Calu3 (cell line): ENCODE measurements at regions of chr4 and their contacts with region 1.

Region 1: GRCh38 chr4:183471946-183472708 is 27.7 kb downstream of the CDKN2AIP start:
- DNase-seq: peak; percentile 87
- H3K4me3 Mint-ChIP-seq: no peak overlapping the region
- H3K27ac Mint-ChIP-seq: no peak overlapping the region
- H3K4me1 Mint-ChIP-seq: peaks cover 22% of the 10 kb centered on the region
- H3K27me3 Mint-ChIP-seq: no peaks in the 10 kb centered on the region
- CTCF ChIP-seq: peak; percentile 46

Region 2: DNA sequence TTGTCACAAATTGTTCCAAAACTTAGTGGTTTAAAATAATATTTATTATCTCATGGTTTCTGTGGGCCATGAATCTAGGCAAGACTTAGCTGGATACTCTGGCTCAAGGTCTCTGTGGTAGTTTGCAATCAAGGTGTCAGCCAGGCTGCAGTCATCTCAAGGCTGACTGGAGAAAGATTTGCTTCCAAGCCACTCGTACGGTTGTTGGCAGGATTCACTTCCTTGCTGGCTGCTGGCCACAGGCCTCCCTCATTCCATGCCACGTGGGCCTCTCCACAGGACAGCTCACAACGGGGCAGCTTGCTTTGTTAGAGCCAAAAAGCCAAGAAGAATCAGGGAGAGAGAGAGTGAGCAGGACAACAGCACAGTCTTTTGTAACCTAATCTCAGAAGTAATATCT is 271.7 kb before region 1 on chr4:
- CTCF ChIA-PET with region 1: no interaction called
- intact Hi-C with region 1: no loop called
- DNase-seq: peak; percentile 75
- H3K4me3 Mint-ChIP-seq: no peak overlapping the region
- H3K27ac Mint-ChIP-seq: peak overlapping the region; percentile 54
- H3K4me1 Mint-ChIP-seq: peaks cover 32% of the 10 kb centered on the region
- H3K27me3 Mint-ChIP-seq: no peaks in the 10 kb centered on the region
- CTCF ChIP-seq: no peak

Region 3: GRCh38 chr4:183602557-183603027 is 130.5 kb after region 1 on chr4:
- CTCF ChIA-PET with region 1: interaction called, 3 read pairs
- intact Hi-C with region 1: loop called (anchors 1 kb)
- DNase-seq: no peak
- H3K4me3 Mint-ChIP-seq: no peak overlapping the region
- H3K27ac Mint-ChIP-seq: no peak overlapping the region
- H3K4me1 Mint-ChIP-seq: peaks cover 11% of the 10 kb centered on the region
- H3K27me3 Mint-ChIP-seq: no peaks in the 10 kb centered on the region
- CTCF ChIP-seq: no peak

Region 4: DNA sequence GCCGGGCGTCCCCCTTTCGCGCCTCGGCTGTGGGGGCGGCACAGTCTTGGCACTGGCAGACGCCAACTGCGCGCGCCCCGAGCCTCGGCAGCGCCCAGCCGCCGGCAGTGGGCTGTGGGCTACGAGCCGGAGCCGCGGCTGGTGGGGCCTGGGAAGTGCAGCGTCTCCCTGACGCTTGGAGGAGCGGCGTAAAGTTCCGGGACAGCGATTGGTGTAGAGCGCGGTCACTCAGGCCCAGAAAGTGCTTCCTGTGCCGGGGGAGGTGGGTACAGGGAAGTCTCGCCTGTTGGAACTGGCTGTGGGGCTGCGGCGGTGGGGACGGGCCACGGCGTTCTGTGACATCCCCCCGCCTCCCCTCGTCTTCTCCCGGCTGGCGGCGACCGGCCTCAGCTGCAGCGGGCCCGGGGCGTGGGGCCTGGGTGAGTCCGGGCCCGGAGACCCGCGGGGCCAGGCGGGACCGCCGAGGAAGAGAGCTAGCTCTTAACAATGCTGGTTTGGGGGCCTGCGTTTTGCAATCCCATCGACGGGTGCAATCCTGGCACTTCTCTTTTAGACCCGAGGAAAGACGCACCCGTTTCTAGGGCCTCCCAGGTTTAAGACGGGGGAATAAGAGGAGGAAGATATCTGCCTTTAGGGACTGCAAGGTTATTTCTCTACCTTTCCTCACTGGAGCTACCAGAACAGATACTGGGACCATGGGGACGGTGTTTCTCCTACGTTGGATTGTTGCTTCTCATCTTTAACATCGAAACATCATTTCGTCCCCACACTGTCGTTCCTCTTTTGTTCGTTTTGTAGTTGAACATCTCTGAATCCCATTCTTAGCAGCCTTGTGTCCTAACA is 187.1 kb after region 1 on chr4 and contains the starts of genes RWDD4 and TRAPPC11:
- CTCF ChIA-PET with region 1: no interaction called
- intact Hi-C with region 1: loop called (anchors 5 kb)
- DNase-seq: peak; percentile 91
- H3K4me3 Mint-ChIP-seq: peak within 1 kb of the TSS; percentile 81
- H3K27ac Mint-ChIP-seq: peak within 1 kb of the TSS; percentile 66
- H3K4me1 Mint-ChIP-seq: peaks cover 9% of the 10 kb centered on the region
- H3K27me3 Mint-ChIP-seq: no peaks in the 10 kb centered on the region
- CTCF ChIP-seq: no peak
- total RNA-seq, gene RWDD4: 13.0 and 15.9 TPM in 2 replicates
- total RNA-seq, gene TRAPPC11: 20.0 and 21.5 TPM in 2 replicates

Region 5: GRCh38 chr4:184163813-184164212 is 691.7 kb after region 1 on chr4:
- CTCF ChIA-PET with region 1: no interaction called
- intact Hi-C with region 1: loop called (anchors 5 kb)
- DNase-seq: peak; percentile 70
- H3K4me3 Mint-ChIP-seq: no peak overlapping the region
- H3K27ac Mint-ChIP-seq: no peak overlapping the region
- H3K4me1 Mint-ChIP-seq: no peaks in the 10 kb centered on the region
- H3K27me3 Mint-ChIP-seq: peaks cover 28% of the 10 kb centered on the region
- CTCF ChIP-seq: peak; percentile 37

Region 6: DNA sequence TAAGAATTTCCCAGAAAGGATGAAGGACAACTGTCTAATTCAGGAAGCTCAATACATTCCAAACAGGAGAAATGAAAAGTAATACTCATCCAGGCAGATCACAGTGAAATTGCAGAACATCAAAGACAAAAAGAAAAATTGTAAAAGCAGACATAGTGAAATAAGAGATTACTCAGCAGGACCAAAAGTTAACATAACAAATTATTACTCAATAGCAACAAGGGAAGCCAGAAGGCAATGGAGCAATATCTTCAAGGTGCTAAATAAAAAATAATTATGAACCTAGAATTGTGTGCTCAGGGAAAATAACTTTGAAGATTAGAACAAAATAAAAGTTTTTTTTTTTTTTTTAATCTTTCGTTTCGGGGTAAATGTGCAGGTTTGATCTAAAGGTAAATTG is 776.1 kb after region 1 on chr4:
- CTCF ChIA-PET with region 1: no interaction called
- intact Hi-C with region 1: no loop called
- DNase-seq: no peak
- H3K4me3 Mint-ChIP-seq: no peak overlapping the region
- H3K27ac Mint-ChIP-seq: no peak overlapping the region
- H3K4me1 Mint-ChIP-seq: no peaks in the 10 kb centered on the region
- H3K27me3 Mint-ChIP-seq: no peaks in the 10 kb centered on the region
- CTCF ChIP-seq: no peak